GM23248 (cell line): ENCODE measurements at regions of chr4 and their contacts with region 1.

Region 1: GRCh38 chr4:183407128-183407585 is 37.3 kb upstream of the CDKN2AIP start:
- DNase-seq: peak; percentile 82
- H3K4me3 ChIP-seq: peak overlapping the region; percentile 76
- H3K27ac ChIP-seq: no peak overlapping the region
- H3K4me1 ChIP-seq: peaks cover 10% of the 10 kb centered on the region
- H3K27me3 ChIP-seq: no peaks in the 10 kb centered on the region

Region 2: GRCh38 chr4:182764137-182764536 is 643.0 kb before region 1 on chr4:
- in situ Hi-C with region 1: no loop called
- DNase-seq: peak; percentile 5
- H3K4me3 ChIP-seq: no peak overlapping the region
- H3K27ac ChIP-seq: no peak overlapping the region
- H3K4me1 ChIP-seq: no peaks in the 10 kb centered on the region
- H3K27me3 ChIP-seq: peaks cover 6% of the 10 kb centered on the region; the same call in 1 of the 2 replicates

Region 3: GRCh38 chr4:183272384-183272783 is 134.8 kb before region 1 on chr4:
- in situ Hi-C with region 1: loop called (anchors 10 kb)
- DNase-seq: no peak
- H3K4me3 ChIP-seq: no peak overlapping the region
- H3K27ac ChIP-seq: no peak overlapping the region
- H3K4me1 ChIP-seq: no peaks in the 10 kb centered on the region
- H3K27me3 ChIP-seq: no peaks in the 10 kb centered on the region